Ascending aorta (tissue), 2 donors: ENCODE measurements at regions of chr16 and their contacts with region 1.

Region 1: GRCh38 chr16:48244080-48244862 is at the start of gene LONP2:
- DNase-seq: peak; percentile 60 to 93
- H3K4me3 ChIP-seq: peak within 1 kb of the TSS; percentile 75 to 96
- H3K27ac ChIP-seq: peak within 1 kb of the TSS; percentile 81 to 85
- H3K4me1 ChIP-seq: peaks cover 0 to 24% of the 10 kb centered on the region in 2 donors
- H3K27me3 ChIP-seq: no peaks in the 10 kb centered on the region
- CTCF ChIP-seq: no peak
- total RNA-seq, gene LONP2: 70.0 TPM

Region 2: DNA sequence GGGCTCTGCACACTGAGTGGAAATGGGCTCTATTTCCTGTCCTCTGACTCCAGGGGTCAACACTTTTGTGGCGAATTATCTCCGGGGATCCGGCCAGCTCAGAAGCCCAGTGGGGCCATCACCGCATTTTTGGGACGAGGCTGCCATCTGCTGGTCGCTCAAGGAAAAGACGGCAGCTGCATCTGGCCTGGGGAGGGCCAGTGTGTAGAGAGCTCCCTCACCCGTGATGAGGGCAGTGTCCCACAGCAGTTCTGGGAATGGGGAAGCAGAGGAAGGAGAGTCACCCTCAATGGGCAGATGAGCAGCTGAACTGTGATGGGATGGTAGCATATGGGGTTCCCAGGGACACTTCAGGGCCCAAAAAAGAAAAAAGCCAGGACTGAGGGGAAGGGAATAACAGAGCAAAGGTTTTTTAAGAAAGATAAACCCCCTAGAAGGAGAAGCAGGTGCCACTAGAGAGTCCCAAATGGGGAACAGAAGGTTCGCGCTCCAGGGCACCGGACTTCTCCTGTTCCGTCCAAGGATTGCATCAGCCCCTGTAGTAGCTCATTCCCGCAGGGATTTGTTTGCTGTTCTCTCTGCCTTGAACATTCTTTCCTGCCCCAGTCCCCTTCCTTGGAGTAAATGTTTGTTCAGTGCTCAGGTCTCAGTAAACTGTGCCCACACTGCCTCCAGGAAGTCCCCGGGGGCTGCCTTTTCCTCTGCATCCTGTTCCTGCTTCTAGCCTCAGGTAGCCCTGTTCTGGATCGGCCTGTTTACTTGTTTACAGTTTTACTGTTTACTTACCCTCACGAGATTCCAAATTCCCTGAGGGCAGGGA is 79.2 kb before region 1 on chr16:
- intact Hi-C with region 1: no loop called
- DNase-seq: peak; percentile 23 to 84
- H3K4me3 ChIP-seq: no peak overlapping the region
- H3K27ac ChIP-seq: no peak overlapping the region
- H3K4me1 ChIP-seq: peaks cover 0 to 3% of the 10 kb centered on the region in 2 donors
- H3K27me3 ChIP-seq: no peaks in the 10 kb centered on the region
- CTCF ChIP-seq: peak; percentile 69 to 85 (median 76)

Region 3: DNA sequence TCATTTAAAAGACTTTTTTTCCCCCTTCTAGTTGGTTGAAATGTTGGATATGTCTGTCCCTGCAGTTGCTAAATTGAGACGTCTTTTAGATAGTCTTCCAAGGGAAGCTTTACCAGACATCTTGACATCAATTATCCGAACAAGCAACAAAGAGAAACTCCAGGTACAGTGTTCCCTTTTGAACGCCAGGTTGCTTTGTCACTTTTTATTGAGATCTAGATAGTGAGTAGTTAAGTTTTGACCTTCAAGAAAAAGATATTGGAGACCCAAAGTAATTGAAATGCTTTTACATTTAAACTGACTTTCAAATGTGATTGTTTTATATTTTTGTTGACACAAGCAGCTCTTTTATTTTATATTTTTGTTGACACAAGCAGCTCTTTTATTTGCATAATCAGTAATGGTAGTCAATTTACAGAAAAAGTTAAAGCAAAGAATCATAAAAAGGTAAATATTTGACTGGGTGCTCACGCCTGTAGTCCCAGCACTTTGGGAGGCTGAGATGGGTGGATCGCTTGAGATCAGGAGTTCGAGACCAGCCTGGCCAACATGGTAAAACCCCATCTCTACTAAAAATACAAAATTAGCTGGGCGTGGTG is 12.4 kb after region 1 on chr16:
- intact Hi-C with region 1: no loop called
- DNase-seq: no peak
- H3K4me3 ChIP-seq: no peak overlapping the region
- H3K27ac ChIP-seq: no peak overlapping the region
- H3K4me1 ChIP-seq: no peaks in the 10 kb centered on the region
- H3K27me3 ChIP-seq: no peaks in the 10 kb centered on the region
- CTCF ChIP-seq: no peak

Region 4: DNA sequence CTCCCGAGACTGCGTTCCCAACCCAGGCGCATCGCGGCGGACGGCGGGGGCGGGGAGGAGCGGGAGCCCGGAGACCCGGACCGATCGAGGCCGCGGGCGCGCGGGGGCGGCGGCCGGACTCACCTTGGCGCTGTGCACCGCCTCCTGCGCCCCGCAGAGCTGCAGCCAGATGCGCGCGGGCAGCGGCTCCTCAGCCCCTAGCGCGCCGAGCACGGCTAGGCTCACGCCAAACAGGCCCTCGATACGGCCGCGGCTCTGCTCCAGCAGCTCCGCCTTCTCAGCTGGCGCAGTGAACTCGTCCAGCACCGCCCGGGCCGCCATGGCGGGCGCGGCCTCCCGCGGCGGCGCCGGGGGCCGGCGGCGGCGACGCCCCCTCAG is 365.4 kb after region 1 on chr16:
- intact Hi-C with region 1: loop called (anchors 1 kb)
- DNase-seq: no peak
- H3K4me3 ChIP-seq: peak overlapping the region; percentile 88 to 99
- H3K27ac ChIP-seq: peak overlapping the region; percentile 91 to 95
- H3K4me1 ChIP-seq: peaks cover 4 to 18% of the 10 kb centered on the region in 2 donors
- H3K27me3 ChIP-seq: no peaks in the 10 kb centered on the region
- CTCF ChIP-seq: no peak

Region 5: DNA sequence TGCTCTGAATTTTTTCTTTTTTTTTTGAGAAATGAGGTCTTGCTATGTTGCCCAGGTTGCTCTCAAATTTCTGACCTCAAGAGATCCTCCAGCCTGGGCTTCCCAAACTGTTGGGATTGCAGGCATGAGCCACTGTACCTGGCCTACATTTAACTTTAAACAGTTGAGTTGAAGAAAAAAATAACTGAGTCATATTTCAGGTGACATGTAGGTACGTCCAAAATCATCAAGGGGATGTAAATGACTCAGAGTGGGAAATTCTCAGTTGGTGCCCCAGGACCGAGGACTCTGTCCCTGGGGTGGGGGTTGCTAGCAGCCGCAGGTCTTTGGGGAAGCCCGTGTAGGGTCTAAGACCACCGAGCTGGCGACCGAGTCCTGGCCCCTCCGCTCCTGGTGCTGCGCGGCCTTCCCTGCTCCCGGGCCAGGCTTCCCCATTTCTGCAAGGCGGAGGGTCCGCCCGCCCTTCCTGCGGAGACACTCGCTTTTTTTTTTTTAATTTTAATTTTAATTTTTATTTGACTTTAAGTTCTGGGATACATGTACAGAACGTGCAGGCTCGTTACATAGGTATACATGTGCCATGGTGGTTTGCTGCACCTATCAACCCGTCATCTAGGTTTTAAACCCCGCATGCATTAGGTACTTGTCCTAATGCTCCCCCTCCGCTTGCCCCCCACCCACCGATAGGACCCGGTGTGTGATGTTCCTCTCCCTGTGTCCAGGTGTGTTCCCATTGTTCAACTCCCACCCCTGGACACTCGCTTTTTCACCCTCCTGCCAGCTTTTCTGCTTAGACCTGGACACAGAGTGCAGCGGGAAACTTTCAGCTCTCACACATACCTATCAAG is 378.4 kb after region 1 on chr16:
- intact Hi-C with region 1: no loop called
- DNase-seq: no peak
- H3K4me3 ChIP-seq: peak overlapping the region; percentile 46 to 59
- H3K27ac ChIP-seq: peak overlapping the region; percentile 48 to 60
- H3K4me1 ChIP-seq: peaks cover 0 to 11% of the 10 kb centered on the region in 2 donors
- H3K27me3 ChIP-seq: no peaks in the 10 kb centered on the region
- CTCF ChIP-seq: no peak